ENCODE measurements at regions of chr16 and their contacts with region 1.

Region 1: DNA sequence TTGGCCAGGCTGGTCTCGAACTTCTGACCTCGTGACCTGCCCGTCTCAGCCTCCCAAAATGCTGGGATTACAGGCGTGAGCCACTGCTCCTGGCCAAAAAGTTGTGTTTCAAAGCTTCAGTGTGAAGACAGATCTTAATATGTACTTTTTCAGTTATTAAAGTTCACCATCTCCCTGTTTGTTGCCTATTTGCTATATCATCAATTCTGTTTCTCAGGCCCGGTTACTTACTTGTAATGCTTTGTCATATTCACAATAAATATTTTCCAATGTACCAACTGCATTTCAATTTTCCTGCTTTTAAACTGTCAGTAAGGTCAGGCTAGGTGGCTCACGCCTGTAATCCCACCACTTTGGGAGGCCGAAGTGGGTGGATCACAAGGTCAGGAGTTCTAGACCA is 22.5 kb downstream of the FANCA start:
- DNase-seq: no peak
- H3K4me3 ChIP-seq: no peak overlapping the region
- H3K4me3 Mint-ChIP-seq: no peak overlapping the region
- H3K27ac ChIP-seq: no peak overlapping the region
- H3K27ac Mint-ChIP-seq: peak overlapping the region in 1 of 7 donors; percentile 19
- H3K4me1 ChIP-seq: no peaks in the 10 kb centered on the region
- H3K4me1 Mint-ChIP-seq: peaks cover 2% of the 10 kb centered on the region
- H3K27me3 ChIP-seq: no peaks in the 10 kb centered on the region
- H3K27me3 Mint-ChIP-seq: peaks cover 0 to 4% (median 0%) of the 10 kb centered on the region in 3 donors
- CTCF ChIP-seq: no peak

Region 2: GRCh38 chr16:89706507-89707263 is 87.3 kb before region 1 on chr16:
- intact Hi-C with region 1: loop called (anchors 1 to 2 kb)
- DNase-seq: peak in 1 of 3 donors; percentile 4
- H3K4me3 ChIP-seq: no peak overlapping the region
- H3K4me3 Mint-ChIP-seq: peak overlapping the region in 1 of 2 donors; percentile 67
- H3K27ac ChIP-seq: no peak overlapping the region
- H3K27ac Mint-ChIP-seq: peak overlapping the region in 1 of 7 donors; percentile 13
- H3K4me1 ChIP-seq: peaks cover 13 to 17% of the 10 kb centered on the region in 2 donors
- H3K4me1 Mint-ChIP-seq: peaks cover 11% of the 10 kb centered on the region
- H3K27me3 ChIP-seq: no peaks in the 10 kb centered on the region
- H3K27me3 Mint-ChIP-seq: peaks cover 13 to 16% (median 13%) of the 10 kb centered on the region in 3 donors
- CTCF ChIP-seq: no peak

Region 3: GRCh38 chr16:89741342-89742014 is 52.5 kb before region 1 on chr16:
- intact Hi-C with region 1: no loop called
- DNase-seq: no peak
- H3K4me3 ChIP-seq: no peak overlapping the region
- H3K4me3 Mint-ChIP-seq: no peak overlapping the region
- H3K27ac ChIP-seq: peak overlapping the region in 1 of 2 donors; percentile 26
- H3K27ac Mint-ChIP-seq: peak overlapping the region in 5 of 7 donors; percentile 40 to 76 (median 59)
- H3K4me1 ChIP-seq: no peaks in the 10 kb centered on the region
- H3K4me1 Mint-ChIP-seq: peaks cover 2% of the 10 kb centered on the region
- H3K27me3 ChIP-seq: no peaks in the 10 kb centered on the region
- H3K27me3 Mint-ChIP-seq: no peaks in the 10 kb centered on the region
- CTCF ChIP-seq: no peak

Region 4: DNA sequence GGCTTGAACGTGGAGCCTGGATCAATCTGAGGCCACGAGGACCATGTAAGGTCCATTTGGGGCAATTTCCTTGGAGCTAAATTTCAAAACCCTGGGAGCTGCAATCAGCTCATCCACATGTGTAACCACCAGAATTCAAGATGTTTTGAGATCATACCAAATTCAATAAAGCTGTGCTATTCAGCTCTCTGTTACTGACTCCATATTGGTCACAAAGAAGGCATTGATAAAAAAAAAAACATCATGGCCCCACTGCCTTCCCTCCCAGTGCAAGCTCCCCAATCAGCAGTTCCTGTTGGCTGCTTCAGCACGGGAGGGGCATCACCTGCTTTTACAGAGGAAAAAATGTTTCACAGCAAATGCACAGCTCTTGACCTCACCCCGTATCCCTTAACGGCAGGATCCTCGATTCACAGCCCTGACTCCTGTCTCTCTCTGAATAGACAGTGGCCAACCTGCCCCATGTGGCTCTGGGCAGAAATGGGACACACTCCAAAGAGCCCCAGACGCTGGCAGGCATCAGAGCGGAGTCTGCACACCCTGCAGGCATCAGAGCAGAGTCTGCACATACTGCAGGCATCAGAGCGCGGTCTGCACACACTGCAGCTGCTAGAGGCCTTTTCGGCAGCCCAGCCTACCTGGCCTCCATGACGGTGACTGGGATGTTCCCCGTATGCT is 14.6 kb before region 1 on chr16:
- intact Hi-C with region 1: no loop called
- DNase-seq: no peak
- H3K4me3 ChIP-seq: no peak overlapping the region
- H3K4me3 Mint-ChIP-seq: no peak overlapping the region
- H3K27ac ChIP-seq: peak overlapping the region in 1 of 2 donors; percentile 14
- H3K27ac Mint-ChIP-seq: peak overlapping the region in 1 of 7 donors; percentile 76
- H3K4me1 ChIP-seq: no peaks in the 10 kb centered on the region
- H3K4me1 Mint-ChIP-seq: no peaks in the 10 kb centered on the region
- H3K27me3 ChIP-seq: no peaks in the 10 kb centered on the region
- H3K27me3 Mint-ChIP-seq: peaks cover 0 to 1% (median 0%) of the 10 kb centered on the region in 3 donors
- CTCF ChIP-seq: no peak

Measured in CD14-positive monocyte (primary cell).